ENCODE measurements at regions of chr12 and their contacts with region 1.

Region 1: GRCh38 chr12:3202734-3203446 is 125.7 kb downstream of the TSPAN9 start:
- DNase-seq: peak; percentile 71 to 78
- ATAC-seq: peak; percentile 9 to 68 (median 28)
- H3K4me3 ChIP-seq: peak overlapping the region in 9 of 10 donors; percentile 41 to 79 (median 59)
- H3K27ac ChIP-seq: peak overlapping the region; percentile 62 to 93 (median 86)
- H3K4me1 ChIP-seq: peaks cover 32 to 76% (median 59%) of the 10 kb centered on the region in 9 donors
- H3K27me3 ChIP-seq: peaks cover 0 to 42% (median 0%) of the 10 kb centered on the region in 7 donors
- CTCF ChIP-seq: peak; percentile 84 to 91 (median 90)

Region 2: DNA sequence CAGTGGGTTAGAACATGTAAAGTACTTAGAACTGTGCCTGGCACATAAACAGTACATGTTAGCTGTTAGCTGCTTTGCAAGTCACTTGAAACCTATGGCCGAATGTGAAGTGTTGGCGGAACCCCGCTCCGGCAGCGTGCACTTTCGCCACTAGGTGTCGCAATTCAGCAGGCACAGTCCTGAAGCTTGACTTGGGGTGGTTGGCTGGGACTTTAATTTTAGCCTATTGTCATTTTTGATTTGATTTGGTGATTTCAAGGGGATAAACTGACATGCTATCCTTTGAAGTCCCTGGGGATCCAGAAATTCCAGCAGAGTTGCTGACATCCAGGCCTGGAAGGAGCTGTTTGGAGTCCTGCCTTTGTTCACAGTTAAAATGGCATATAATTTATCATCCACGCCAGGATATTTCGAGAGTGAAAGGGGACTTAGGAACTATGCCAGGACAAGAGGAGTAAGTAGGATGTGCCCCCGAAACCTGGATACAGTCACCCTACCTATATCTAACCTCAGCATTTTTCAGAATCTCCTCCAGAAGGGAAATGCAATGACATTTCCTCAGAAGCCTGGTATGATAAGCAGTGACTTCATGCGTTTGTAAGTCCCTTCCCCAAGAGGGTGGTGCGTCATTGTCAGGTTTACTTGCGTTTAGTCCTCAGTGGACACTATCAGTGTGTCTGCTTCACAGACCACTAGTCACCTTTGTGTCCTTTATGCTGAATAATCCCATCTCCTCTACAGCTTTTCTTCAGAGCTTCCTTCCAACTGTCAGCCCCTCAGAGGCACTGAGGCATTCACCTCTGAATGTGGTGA is 129.2 kb before region 1 on chr12:
- intact Hi-C with region 1: loop called (anchors 1 to 10 kb)
- DNase-seq: peak; percentile 87 to 88
- ATAC-seq: peak; percentile 10 to 70 (median 47)
- H3K4me3 ChIP-seq: no peak overlapping the region
- H3K27ac ChIP-seq: peak overlapping the region in 6 of 10 donors; percentile 5 to 50 (median 36)
- H3K4me1 ChIP-seq: peaks cover 3 to 53% (median 29%) of the 10 kb centered on the region in 9 donors
- H3K27me3 ChIP-seq: peaks cover 0 to 38% (median 0%) of the 10 kb centered on the region in 7 donors
- CTCF ChIP-seq: peak; percentile 96 to 100 (median 99)

Region 3: GRCh38 chr12:3135522-3136461 is 67.1 kb before region 1 on chr12:
- intact Hi-C with region 1: loop called (anchors 2 to 5 kb)
- DNase-seq: no peak
- ATAC-seq: peak; percentile 11 to 52 (median 44)
- H3K4me3 ChIP-seq: no peak overlapping the region
- H3K27ac ChIP-seq: peak overlapping the region in 1 of 10 donors; percentile 3
- H3K4me1 ChIP-seq: peaks cover 37 to 100% (median 88%) of the 10 kb centered on the region in 9 donors
- H3K27me3 ChIP-seq: peaks cover 0 to 12% (median 0%) of the 10 kb centered on the region in 7 donors
- CTCF ChIP-seq: peak; percentile 75 to 86 (median 82)

Region 4: DNA sequence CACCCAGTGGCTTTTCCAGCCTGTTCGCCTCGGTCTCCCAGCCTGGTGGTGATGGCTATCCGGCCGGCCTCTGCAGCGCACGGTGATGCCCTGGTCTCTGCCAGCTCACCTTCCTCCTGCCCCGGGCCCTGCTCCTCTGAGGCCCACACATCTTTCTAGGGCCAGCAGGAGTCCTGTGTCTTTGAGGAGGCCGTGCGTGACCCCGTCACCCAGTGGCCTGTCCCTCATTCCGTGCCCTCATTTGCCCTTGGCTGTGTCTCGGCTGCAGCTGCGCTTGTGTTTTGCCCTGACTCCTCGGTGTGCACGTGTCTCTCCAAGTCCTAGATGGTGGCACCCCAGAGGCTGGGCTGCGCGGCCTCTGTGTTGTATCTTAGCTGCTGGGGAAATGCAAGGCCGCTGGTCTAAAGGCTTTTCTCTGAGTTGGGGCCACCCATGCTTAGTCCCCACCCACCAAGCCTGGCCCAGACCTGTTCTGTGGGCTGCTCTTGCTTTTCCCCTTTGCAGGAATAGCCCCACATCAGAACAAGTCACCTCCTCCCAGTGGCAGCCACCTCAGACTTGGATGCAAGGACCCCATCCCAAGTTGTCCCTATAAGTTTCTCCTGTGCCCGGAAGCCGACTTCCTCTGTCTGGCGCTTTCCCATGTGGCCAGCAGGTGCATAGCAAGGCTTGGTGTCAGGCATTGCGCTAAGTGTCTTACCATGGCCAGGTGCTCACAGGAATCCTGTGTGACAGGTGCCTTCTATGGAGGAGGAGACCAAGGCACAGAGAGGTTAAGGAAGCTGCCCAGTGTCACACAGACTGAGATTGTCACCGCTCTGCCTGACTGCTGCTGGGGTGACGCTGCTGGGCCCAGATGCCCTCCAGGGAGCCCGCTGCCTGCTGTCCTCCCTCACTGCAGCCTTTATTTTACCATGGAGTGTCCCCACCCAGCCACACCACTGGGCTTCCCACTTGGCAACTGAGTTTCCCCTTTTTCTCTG is 61.3 kb before region 1 on chr12:
- intact Hi-C with region 1: loop called (anchors 2 to 5 kb)
- DNase-seq: peak in 1 of 2 donors; percentile 44
- ATAC-seq: peak in 7 of 8 donors; percentile 7 to 27 (median 15)
- H3K4me3 ChIP-seq: no peak overlapping the region
- H3K27ac ChIP-seq: peak overlapping the region in 8 of 10 donors; percentile 43 to 68 (median 61)
- H3K4me1 ChIP-seq: peaks cover 25 to 82% (median 65%) of the 10 kb centered on the region in 9 donors
- H3K27me3 ChIP-seq: no peaks in the 10 kb centered on the region
- CTCF ChIP-seq: no peak

Region 5: DNA sequence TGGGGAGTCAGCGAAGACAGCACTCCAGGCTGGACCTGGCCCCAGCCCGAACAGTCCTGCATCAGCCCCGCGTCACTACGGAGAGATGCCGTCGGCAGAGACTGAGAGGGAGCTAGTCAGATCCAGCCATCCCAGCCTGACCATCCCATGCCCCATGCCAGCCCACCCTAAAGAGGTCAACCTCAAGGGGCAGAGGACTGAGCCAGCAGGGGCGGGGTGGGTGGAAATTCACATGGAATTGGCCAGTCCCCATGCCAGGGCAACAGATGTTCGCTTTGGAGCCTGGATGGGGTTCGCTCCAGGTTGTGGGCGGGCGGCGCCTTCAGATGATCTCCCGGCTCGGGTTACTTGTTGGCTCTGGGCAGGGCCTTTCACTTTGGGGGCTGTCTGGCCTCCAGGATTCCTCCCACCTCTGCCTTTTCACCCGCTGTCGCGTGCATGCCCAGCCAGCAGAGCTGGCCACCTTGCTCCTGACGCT is 28.5 kb after region 1 on chr12:
- intact Hi-C with region 1: no loop called
- DNase-seq: no peak
- ATAC-seq: peak; percentile 15 to 66 (median 52)
- H3K4me3 ChIP-seq: no peak overlapping the region
- H3K27ac ChIP-seq: peak overlapping the region; percentile 60 to 92 (median 72)
- H3K4me1 ChIP-seq: peaks cover 6 to 82% (median 52%) of the 10 kb centered on the region in 9 donors
- H3K27me3 ChIP-seq: no peaks in the 10 kb centered on the region
- CTCF ChIP-seq: no peak

Region 6: GRCh38 chr12:3242199-3242863 is 39.4 kb after region 1 on chr12:
- intact Hi-C with region 1: no loop called
- DNase-seq: peak; percentile 73 to 79
- ATAC-seq: peak; percentile 71 to 88 (median 79)
- H3K4me3 ChIP-seq: no peak overlapping the region
- H3K27ac ChIP-seq: peak overlapping the region; percentile 70 to 99 (median 89)
- H3K4me1 ChIP-seq: peaks cover 14 to 100% (median 85%) of the 10 kb centered on the region in 9 donors
- H3K27me3 ChIP-seq: no peaks in the 10 kb centered on the region
- CTCF ChIP-seq: peak in 2 of 9 donors; percentile 7 to 29

Region 7: DNA sequence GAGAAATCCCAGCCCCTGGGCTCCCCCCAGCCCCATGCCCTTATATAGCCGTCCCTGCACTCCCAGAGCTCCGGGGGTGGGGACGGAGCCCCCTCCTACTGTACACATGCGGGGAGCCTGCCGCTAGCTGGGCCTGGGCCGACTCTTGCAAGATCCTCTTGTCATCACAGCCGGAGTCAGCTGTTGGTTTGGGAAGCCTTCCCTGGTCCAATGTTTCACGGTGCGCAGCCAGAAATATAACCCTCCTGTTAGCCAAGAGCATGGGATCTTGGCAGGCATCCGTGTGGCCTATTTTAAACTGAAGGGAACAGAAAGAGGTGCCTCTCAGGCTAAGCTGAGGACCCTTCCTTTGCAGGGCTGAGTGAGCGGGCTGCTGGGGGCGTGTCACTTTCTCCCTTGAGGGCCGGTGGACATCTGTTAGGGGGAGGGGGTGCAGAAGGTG is 49.6 kb after region 1 on chr12:
- intact Hi-C with region 1: loop called in 2 of 10 experiments (anchors 5 to 10 kb)
- DNase-seq: peak; percentile 81 to 93
- ATAC-seq: peak; percentile 50 to 68 (median 60)
- H3K4me3 ChIP-seq: peak overlapping the region in 1 of 10 donors; percentile 0
- H3K27ac ChIP-seq: peak overlapping the region; percentile 76 to 99 (median 89)
- H3K4me1 ChIP-seq: peaks cover 62 to 100% (median 87%) of the 10 kb centered on the region in 9 donors
- H3K27me3 ChIP-seq: no peaks in the 10 kb centered on the region
- CTCF ChIP-seq: no peak

Region 8: DNA sequence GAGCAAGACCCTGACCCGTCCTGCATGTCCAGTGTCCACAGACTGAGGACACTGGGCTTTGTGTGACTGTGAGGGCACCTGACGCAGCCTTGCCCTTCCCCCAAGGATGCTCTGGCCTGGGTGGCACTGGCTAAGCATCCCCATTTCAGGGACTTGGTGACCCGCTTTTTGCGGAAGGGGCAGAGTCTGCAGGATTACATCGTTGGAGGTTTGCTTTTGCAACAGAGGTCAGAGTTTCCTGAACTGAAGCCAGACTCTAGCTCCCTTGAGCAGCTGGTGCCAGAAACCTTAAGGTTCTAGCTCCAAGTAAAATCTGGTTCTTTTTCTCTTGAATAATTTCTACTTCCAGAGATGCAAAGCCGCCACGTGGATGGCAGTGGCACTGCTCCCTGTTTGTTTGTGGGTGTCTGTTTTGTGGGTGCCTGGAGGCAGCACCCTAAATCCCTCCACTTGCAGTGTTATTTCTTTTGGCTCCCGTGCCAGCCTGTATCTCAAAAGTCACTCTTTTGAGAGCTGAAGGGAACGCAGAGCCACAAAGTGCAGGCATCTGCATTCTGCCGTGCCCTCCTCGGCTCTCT is 59.0 kb after region 1 on chr12:
- intact Hi-C with region 1: loop called in 2 of 10 experiments (anchors 5 to 10 kb)
- DNase-seq: no peak
- ATAC-seq: no peak
- H3K4me3 ChIP-seq: no peak overlapping the region
- H3K27ac ChIP-seq: peak overlapping the region in 9 of 10 donors; percentile 45 to 99 (median 76)
- H3K4me1 ChIP-seq: peaks cover 24 to 100% (median 90%) of the 10 kb centered on the region in 9 donors
- H3K27me3 ChIP-seq: no peaks in the 10 kb centered on the region
- CTCF ChIP-seq: peak in 1 of 9 donors; percentile 11

Region 9: GRCh38 chr12:3275171-3276041 is 72.5 kb after region 1 on chr12:
- intact Hi-C with region 1: loop called in 8 of 10 experiments (anchors 2 to 10 kb)
- DNase-seq: peak; percentile 71 to 83
- ATAC-seq: peak; percentile 25 to 81 (median 57)
- H3K4me3 ChIP-seq: no peak overlapping the region
- H3K27ac ChIP-seq: peak overlapping the region in 6 of 10 donors; percentile 71 to 87 (median 82)
- H3K4me1 ChIP-seq: peaks cover 23 to 97% (median 76%) of the 10 kb centered on the region in 9 donors
- H3K27me3 ChIP-seq: no peaks in the 10 kb centered on the region
- CTCF ChIP-seq: peak; percentile 97 to 100 (median 98)